ENCODE measurements at regions of chr1 and their contacts with region 1.

Region 1: DNA sequence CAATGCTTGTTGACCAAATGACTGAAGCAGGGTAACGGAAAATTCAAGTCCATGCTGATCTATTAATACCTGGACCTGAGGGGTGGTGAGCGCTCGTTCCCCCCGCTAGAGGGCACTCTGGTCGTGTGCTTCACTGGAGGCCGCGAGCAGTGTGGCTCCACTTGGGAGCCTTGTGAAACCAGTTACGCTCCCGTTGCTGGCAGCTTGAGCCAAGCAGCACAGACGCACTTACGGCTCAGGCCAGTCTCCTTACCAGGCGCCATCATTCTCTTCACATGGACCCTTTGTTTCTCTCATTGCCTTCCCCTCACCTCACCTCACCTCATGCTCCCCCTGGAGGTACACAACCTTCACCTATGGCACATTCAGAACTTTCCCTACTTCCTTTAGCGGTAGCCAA is 49.7 kb upstream of the TSPAN2 start:
- DNase-seq: peak; percentile 90

Region 2: DNA sequence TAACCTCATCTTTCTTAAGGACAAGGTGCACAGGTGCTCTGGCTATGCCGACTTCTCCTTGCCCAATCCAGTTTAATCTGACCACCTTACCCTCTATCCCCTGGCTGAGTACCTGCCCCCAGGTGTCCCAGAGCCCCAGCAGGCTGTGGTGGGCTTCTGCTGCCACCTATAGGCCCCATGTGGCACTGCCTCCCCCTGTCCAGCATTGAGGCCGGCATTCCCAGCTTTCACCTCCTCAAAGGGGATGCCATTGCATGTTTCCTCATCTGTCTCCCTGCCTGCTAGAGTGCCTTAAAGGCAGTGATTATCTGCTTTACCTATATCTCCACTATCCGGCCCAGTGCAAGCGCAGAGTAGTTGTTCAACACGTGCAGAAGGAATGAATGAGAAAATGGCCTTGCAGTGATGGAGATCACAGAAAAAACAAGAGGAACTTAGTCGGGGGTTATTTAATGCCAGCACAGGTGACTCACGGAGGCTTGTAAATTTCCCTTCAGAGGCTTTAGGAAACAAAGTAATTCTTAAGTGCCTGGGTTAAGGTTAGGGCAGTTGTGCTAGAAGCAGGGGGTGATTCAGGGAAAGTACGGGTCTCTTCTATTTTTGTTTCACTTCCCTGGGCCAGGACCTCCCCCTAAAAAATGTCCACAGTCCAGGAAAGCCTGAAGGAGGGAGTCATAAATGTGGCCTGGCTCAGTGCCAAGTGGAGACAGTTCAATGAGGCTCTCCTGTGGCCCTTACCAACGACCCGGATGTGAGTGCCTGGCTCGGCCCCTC is 330.9 kb after region 1 on chr1:
- CTCF ChIA-PET with region 1: interaction called, 14 read pairs
- POLR2A ChIA-PET with region 1: no interaction called
- DNase-seq: peak; percentile 82

Region 3: DNA sequence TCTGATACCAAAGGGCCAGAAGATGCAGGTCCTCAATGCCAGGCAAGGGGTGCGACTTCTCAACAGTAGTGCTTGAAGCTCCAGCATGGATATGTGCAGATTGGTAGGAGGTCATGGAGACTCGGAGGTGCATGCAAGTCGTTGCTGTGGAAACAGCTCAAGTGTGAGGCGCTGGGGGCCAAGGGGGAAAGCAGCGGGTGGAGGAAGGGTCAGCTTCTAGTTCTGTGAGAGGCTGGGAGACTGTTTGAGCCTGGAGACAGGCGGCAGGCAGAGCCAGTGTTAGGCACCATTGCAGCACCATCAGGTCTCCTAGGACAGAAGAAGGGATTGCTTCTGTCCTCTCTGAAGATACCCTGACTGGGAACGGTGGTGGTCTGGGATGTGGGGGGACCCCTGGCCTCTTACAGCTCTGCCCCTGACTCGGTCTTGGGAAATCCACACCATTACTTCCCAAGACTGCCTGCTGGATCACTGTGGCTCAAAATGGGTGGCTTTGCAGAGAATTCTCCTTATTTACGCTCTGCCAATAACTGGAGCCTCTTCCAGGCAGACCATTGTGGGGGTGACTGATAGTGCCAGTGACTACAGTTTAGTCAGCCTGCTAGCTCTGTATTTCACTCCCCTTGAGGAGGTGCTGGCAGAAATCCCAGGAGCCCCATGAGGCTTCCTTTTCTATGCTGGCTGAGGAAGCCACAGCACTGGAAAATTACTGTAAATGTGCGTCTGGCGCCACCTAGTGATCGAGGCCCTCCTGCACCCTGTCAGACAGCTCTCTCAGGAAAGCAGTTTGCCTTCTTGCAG is 456.5 kb after region 1 on chr1:
- CTCF ChIA-PET with region 1: interaction called, 17 read pairs
- POLR2A ChIA-PET with region 1: no interaction called
- DNase-seq: peak; percentile 87